ENCODE measurements at regions of chr15 and their contacts with region 1.

Region 1: DNA sequence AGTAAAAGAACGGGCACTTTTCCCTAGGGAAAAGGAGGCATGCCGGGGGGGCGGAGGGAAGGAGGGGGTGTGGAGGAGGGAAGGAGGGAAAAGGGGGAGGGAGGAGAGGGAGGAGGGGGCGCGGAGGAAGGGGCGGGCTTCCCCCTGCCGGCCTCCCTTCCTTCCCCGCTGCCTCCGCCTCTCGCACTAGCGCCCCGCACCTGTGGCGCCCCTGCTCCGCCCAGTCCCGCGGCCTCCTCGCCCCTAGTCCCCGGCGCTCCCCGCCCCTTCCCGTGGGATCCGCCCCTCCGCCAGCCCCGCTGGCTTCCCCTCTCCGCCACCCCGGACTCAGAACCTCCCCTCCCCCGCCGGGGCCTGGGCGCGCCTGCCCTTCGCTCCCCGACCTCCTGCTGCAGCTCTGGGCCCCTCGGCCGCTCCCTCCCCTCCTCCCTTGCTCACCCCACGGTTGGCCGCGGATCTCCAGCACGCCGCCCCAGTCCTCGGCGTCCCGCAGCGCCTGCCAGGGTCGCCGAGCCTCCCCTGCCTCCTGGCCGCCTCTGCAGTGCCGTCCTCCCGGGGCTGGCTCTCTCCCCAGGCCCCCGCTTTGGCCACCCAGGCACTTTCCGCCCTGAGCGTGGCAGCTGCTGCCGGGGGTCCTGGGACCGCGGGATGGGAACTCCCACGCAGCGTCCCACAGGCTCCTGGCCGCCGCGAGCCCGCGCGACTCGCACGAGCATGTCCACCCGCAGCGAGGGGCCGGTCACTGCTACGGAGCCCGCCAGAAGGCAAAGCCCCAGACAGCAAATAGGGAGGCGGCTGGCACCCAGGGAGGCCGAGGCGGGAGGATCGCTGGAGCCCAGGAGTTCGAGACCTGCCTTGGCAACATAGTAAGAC is 147.4 kb downstream of the TJP1 start:
- DNase-seq: no peak
- H3K4me3 Mint-ChIP-seq: no peak overlapping the region
- H3K27ac Mint-ChIP-seq: no peak overlapping the region
- H3K4me1 Mint-ChIP-seq: peaks cover 13% of the 10 kb centered on the region
- H3K27me3 Mint-ChIP-seq: no peaks in the 10 kb centered on the region
- CTCF ChIP-seq: no peak

Region 2: DNA sequence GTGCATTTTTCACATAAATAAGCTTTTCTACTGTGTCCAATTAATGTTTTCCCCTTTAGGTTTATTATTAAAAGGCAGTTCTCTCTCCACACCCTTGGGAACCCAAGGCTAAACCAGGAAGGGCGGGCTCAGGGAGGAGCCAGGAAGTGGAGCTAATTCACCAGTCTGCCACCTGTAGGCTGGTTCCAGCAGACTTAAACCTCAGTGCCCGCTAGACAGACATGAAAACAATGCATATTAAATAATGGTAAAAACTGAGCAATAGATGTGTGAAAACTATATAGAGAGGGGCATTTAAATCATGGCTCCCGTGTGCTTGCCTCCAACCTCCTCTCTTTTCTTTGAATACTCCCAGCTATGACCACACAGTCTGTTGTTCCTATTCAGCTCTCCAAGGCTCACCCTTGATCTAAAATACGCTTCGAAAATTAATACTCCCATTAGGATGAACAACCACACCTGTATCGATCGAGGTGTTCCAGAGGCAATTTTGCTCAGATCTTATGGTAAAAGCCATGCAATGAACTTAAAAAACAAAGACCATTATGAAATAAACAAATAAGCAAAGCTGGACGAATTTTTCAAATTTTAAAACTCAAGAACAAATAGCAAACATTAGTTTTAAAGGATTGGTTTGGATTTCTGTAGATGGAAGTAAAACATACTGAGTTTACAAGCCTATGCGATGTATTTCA is 105.9 kb before region 1 on chr15:
- CTCF ChIA-PET with region 1: no interaction called
- POLR2A ChIA-PET with region 1: no interaction called
- intact Hi-C with region 1: no loop called
- DNase-seq: peak; percentile 33
- H3K4me3 Mint-ChIP-seq: no peak overlapping the region
- H3K27ac Mint-ChIP-seq: no peak overlapping the region
- H3K4me1 Mint-ChIP-seq: no peaks in the 10 kb centered on the region
- H3K27me3 Mint-ChIP-seq: peaks cover 52% of the 10 kb centered on the region
- CTCF ChIP-seq: no peak

Region 3: DNA sequence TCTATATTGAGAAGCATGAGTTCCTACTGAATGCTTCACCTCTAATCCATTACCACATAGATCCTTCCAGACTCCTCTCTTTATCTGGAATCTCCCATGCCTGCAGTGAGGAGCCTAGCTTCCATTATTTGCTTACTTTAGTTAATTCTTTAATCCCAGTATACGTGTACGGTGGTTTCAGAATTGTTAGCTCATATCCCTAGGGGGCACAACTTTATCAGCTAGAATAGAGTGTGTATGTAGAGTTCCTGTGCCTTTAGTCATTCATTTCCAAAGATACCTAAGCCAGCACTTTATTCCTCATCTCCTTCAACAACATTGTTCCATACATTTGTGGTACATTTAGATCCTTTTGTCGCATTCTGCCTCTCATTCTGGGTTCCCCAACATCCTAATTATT is 78.6 kb before region 1 on chr15:
- CTCF ChIA-PET with region 1: no interaction called
- POLR2A ChIA-PET with region 1: no interaction called
- intact Hi-C with region 1: no loop called
- DNase-seq: peak; percentile 7
- H3K4me3 Mint-ChIP-seq: no peak overlapping the region
- H3K27ac Mint-ChIP-seq: no peak overlapping the region
- H3K4me1 Mint-ChIP-seq: no peaks in the 10 kb centered on the region
- H3K27me3 Mint-ChIP-seq: peaks cover 46% of the 10 kb centered on the region
- CTCF ChIP-seq: peak; percentile 30

Region 4: GRCh38 chr15:29736744-29737020 is 61.8 kb after region 1 on chr15:
- CTCF ChIA-PET with region 1: no interaction called
- POLR2A ChIA-PET with region 1: no interaction called
- intact Hi-C with region 1: loop called (anchors 5 kb)
- DNase-seq: peak; percentile 90
- H3K4me3 Mint-ChIP-seq: no peak overlapping the region
- H3K27ac Mint-ChIP-seq: peak overlapping the region; percentile 60
- H3K4me1 Mint-ChIP-seq: peaks cover 22% of the 10 kb centered on the region
- H3K27me3 Mint-ChIP-seq: no peaks in the 10 kb centered on the region
- CTCF ChIP-seq: no peak

Region 5: DNA sequence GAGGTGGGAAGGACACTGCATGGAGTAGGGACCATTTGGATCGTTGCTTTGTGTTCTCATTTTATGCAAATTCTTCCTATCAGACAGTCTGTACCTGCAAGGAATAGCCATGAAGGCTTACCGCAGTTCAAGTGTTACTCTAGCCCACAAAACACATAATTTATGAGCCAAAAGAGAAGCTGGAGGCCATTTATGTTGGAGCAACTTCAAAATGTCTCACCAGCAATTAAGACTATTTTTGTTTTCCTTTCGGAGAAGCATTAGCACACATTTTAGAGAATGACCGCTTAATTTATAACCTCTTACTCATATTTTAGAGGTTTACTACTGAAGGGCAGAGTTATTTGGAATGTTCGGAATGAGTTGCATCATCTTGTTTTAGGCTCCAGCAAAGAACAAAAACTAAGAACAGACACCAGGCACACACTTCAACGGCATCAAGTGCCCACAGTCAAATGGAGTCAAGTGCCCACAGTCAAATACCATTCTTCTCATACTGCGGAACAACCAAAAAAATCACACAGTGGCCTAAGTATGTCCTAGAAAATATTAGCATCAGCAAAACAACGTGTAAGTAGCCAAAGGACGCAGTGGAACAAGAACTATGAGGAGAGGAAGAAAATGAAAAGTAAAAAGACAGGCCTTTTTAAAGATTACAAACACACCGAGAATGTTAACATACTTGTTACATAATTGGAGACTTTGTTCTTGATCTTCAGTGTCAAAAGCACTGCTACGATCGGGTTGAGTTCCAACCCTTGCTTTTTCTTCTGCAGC is 390.3 kb after region 1 on chr15:
- CTCF ChIA-PET with region 1: no interaction called
- POLR2A ChIA-PET with region 1: no interaction called
- intact Hi-C with region 1: loop called (anchors 1 kb)
- DNase-seq: peak; percentile 85
- H3K4me3 Mint-ChIP-seq: peak overlapping the region; percentile 52
- H3K27ac Mint-ChIP-seq: peak overlapping the region; percentile 57
- H3K4me1 Mint-ChIP-seq: peaks cover 26% of the 10 kb centered on the region
- H3K27me3 Mint-ChIP-seq: no peaks in the 10 kb centered on the region
- CTCF ChIP-seq: no peak

Measured in MCF 10A (cell line).